GM12878 (cell line): ENCODE measurements at regions of chr2 and their contacts with region 1.

Region 1: GRCh38 chr2:11688222-11689069 is 18.5 kb upstream of the NTSR2 start:
- DNase-seq: peak; percentile 9
- ATAC-seq: peak; percentile 95
- H3K4me3 ChIP-seq: peak overlapping the region; percentile 23; the same call in 1 of the 2 replicates
- H3K27ac ChIP-seq: no peak overlapping the region
- H3K4me1 ChIP-seq: 0 out of 2 replicates have a peak, but pooled peaks cover 4% of the 10 kb centered on the region
- H3K27me3 ChIP-seq: peaks cover 0 to 2% of the 10 kb centered on the region in 2 experiments; a peak in 2 of 4 replicates
- CTCF ChIP-seq: peak; percentile 71 to 87 (median 82)
- EP300 ChIP-seq: no peak
- POLR2A ChIP-seq: no peak
- RAD21 ChIP-seq: peak; percentile 71

Region 2: DNA sequence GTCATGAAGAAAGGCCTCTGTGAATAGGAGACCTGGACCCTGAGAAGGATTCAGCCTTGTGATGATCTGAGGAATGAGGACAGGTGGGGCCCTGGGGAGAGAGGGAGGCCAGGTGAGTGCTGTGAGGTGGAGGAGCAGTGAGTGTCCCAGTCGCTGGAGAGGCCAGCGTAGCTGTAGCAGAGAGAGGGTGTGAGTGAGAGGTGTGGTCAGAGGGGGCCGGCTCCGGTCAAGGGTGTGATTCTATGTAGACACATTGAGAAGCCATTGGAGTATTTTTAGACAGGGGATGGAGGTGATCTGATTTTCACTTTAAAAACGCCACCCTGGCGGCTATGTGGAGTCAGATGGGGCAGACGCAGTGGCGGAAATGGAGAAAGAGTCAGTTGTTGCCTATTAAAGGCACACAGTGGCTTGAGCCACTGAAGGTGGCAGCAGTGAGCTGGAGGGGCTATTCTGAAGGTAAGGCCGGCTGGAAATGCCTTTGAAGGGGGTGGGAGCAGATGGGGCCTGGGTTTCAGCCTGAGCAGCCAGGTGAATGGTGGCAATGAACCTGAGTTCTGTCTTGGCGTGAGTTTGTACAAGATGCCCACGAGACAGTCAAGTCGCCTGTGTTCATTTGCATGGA is 99.0 kb before region 1 on chr2:
- CTCF ChIA-PET with region 1: interaction called, 3 read pairs
- POLR2A ChIA-PET with region 1: no interaction called
- RAD21 ChIA-PET with region 1: no interaction called
- SMC1A ChIA-PET with region 1: interaction called, 3 read pairs
- in situ Hi-C with region 1: no loop called
- intact Hi-C with region 1: loop called (anchors 5 kb)
- DNase-seq: no peak
- ATAC-seq: peak; percentile 49
- H3K4me3 ChIP-seq: no peak overlapping the region
- H3K27ac ChIP-seq: no peak overlapping the region
- H3K4me1 ChIP-seq: no peaks in the 10 kb centered on the region
- H3K27me3 ChIP-seq: peaks cover 2% of the 10 kb centered on the region in 2 experiments; a peak in 1 of 4 replicates
- CTCF ChIP-seq: 0 out of 6 replicates have a peak, but pooled peaks of 2 of the 3 experiments have one; percentile 13 to 15
- EP300 ChIP-seq: no peak
- POLR2A ChIP-seq: no peak
- RAD21 ChIP-seq: no peak

Region 3: DNA sequence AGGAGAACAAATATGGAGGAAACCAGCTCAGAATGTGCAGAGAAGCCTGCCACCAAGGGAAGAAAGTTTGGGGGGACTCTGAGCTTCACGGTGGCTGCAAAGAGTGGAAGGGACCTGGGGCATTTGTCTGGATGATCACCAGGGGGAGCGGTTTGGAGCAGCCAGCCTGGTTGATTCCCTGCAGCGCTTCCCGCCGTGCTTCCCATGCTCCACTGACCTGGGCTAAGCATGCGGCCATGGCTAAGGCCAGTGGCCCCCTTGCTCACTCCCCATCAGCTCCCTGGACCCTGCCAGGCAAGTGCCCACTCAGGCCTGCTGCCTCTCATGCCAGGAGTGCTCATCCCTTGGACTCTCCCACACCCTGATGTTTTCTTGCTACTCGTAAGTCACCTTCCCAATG is 45.5 kb before region 1 on chr2:
- CTCF ChIA-PET with region 1: no interaction called
- POLR2A ChIA-PET with region 1: no interaction called
- RAD21 ChIA-PET with region 1: no interaction called
- SMC1A ChIA-PET with region 1: no interaction called
- in situ Hi-C with region 1: no loop called
- intact Hi-C with region 1: no loop called
- DNase-seq: no peak
- ATAC-seq: no peak
- H3K4me3 ChIP-seq: no peak overlapping the region
- H3K27ac ChIP-seq: no peak overlapping the region
- H3K4me1 ChIP-seq: no peaks in the 10 kb centered on the region
- H3K27me3 ChIP-seq: no peaks in the 10 kb centered on the region; a peak in 2 of 4 replicates
- CTCF ChIP-seq: no peak
- EP300 ChIP-seq: no peak
- POLR2A ChIP-seq: no peak
- RAD21 ChIP-seq: no peak

Region 4: GRCh38 chr2:11738589-11739436 is 50.4 kb after region 1 on chr2:
- CTCF ChIA-PET with region 1: interaction called, 19 read pairs
- POLR2A ChIA-PET with region 1: no interaction called
- RAD21 ChIA-PET with region 1: interaction called, 6 read pairs
- SMC1A ChIA-PET with region 1: interaction called, 10 read pairs
- in situ Hi-C with region 1: no loop called
- intact Hi-C with region 1: loop called (anchors 2 kb)
- DNase-seq: no peak
- ATAC-seq: peak; percentile 96
- H3K4me3 ChIP-seq: no peak overlapping the region
- H3K27ac ChIP-seq: no peak overlapping the region
- H3K4me1 ChIP-seq: peaks cover 9% of the 10 kb centered on the region
- H3K27me3 ChIP-seq: peaks cover 0 to 5% of the 10 kb centered on the region in 2 experiments; a peak in 1 of 4 replicates
- CTCF ChIP-seq: peak; percentile 46 to 70 (median 67)
- EP300 ChIP-seq: no peak
- POLR2A ChIP-seq: no peak
- RAD21 ChIP-seq: peak; percentile 77

Region 5: DNA sequence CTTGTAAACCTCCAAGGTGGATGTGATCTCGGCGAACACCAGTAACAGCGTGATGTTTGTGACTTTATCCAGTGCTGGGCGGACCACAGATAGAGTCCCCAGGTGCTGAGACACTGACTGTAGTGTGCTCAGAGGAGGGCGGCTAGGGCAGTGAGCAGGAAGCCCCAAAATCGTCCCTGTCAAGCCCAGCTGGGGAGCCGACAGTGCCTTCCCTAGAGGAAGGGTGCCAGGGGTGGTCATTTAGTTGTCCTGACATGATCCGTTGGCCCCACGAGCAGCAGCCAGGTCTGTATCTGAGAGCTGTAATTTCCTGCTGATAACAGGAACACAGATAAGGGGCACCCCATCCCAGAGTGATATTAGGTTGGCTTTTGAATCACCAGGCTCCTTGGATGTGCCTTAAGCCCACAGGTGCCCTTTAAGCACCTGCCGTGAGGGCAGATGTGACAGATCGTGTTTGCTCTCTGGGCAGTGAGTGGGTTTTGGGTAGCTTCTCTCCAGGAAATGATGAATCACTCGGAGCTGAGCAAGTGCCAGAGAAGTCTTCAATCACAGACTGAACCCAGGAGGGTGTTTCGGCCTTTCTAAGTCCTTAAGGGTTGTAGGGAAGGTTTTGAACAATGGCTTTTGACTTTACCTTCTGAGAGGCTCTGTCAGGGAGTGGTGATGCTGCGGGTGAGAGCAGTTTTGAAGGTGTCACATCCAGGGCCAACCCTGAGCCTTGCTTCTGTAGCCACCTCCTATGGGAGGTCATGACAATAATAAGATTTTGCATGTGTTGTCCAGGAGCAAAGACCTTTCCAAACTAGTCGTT is 65.6 kb after region 1 on chr2:
- CTCF ChIA-PET with region 1: interaction called, 10 read pairs
- POLR2A ChIA-PET with region 1: interaction called, 3 read pairs
- RAD21 ChIA-PET with region 1: interaction called, 5 read pairs
- SMC1A ChIA-PET with region 1: interaction called, 4 read pairs
- in situ Hi-C with region 1: no loop called
- intact Hi-C with region 1: no loop called
- DNase-seq: peak; percentile 48
- ATAC-seq: peak; percentile 38
- H3K4me3 ChIP-seq: peak overlapping the region; percentile 66
- H3K27ac ChIP-seq: peak overlapping the region; percentile 97
- H3K4me1 ChIP-seq: peaks cover 59% of the 10 kb centered on the region
- H3K27me3 ChIP-seq: no peaks in the 10 kb centered on the region
- CTCF ChIP-seq: no peak
- EP300 ChIP-seq: no peak
- POLR2A ChIP-seq: peak; percentile 60; the same call in 1 of the 2 replicates
- RAD21 ChIP-seq: no peak

Region 6: DNA sequence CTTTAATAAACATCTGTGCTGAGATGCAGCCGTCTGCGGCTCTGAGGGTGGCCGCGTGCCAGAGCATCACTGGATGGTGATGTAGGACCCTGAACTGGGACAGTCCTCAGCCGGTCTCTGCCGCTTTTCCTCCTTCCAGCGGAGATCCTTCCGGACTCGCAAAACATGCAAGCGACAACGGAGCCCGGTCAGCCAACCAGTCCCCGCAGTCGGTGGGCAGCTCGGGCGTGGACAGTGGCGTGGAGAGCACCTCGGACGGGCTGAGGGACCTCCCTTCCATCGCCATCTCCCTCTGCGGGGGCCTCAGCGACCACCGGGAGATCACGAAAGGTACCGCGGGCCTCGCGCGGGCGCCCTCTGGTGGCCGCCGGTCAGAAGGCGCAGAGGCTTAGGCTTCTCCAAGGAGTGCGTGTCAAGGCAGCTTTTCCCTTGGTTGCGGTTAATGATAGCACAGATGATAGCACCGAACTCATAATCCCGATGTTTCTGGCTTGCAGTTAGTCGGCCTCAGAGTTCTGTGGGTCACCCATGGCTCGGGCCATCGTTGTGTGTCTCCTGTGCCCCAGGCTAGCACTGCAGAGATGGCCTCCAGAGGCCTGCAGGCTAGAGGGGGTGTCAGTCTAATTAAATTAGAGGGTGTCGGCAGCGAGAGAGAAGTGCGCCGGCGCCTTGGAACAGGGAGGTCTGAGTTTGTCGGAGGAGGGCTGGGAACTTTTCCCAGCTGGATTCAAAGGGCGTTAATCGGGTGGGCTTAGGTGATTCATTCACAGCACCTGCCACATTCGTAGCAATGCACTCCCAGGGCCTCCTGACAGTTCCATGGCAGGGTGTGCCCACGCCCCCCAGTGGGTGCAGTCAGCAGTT is 96.5 kb after region 1 on chr2:
- CTCF ChIA-PET with region 1: interaction called, 353 read pairs
- POLR2A ChIA-PET with region 1: interaction called, 7 read pairs
- RAD21 ChIA-PET with region 1: interaction called, 14 read pairs
- SMC1A ChIA-PET with region 1: interaction called, 71 read pairs
- in situ Hi-C with region 1: loop called (anchors 5 kb)
- intact Hi-C with region 1: no loop called
- DNase-seq: no peak
- ATAC-seq: peak; percentile 86
- H3K4me3 ChIP-seq: no peak overlapping the region
- H3K27ac ChIP-seq: no peak overlapping the region
- H3K4me1 ChIP-seq: no peaks in the 10 kb centered on the region
- H3K27me3 ChIP-seq: no peaks in the 10 kb centered on the region
- CTCF ChIP-seq: peak; percentile 60 to 95 (median 79)
- EP300 ChIP-seq: no peak
- POLR2A ChIP-seq: no peak
- RAD21 ChIP-seq: no peak; the same call in 1 of the 2 replicates